B cell (primary cell): ENCODE measurements at regions of chr15 and their contacts with region 1.

Region 1: DNA sequence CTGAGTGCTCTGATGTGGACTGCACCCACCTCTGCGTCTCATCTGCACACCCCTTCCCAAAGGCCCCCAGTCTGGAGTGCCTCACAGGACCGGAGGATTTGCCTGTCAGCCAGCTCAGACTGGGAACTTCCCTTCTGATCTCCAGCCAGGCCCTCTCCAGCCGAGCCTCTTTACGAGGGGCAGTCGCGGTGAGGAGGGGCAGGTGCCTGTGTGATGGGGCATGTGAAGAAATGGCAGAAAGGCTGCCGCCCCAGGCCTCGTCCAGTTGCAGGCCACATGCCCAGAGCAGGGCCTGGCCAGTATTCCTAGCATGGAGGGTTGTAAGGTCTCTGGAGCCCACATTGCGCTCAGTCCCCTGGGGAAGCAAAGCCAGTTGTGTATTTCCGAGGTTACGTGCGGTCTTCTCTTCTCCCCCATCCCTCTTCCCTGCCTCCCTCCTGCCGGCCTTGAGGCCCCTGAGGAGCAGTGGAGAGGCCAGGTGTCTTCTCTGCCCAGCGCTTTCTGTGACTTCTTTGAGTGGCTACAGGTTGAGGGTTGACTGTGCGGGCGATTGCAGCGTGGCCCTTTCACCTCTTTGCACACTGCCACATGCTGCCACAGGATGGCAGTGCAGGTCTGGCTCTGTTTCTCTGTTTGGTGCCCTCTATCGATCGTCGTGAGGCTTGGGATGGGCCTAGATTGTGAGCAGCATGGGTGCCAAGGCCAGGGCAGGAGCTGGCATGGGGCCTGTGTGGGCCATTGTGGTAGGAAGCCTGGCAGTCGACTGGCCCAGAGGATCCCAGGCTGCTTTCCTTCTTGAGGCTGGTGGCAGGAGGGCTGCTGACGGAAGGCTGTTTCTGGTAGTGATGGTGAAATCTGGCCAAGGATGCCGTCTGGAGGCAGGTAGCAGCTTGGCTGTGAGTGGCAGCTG is 5.3 kb downstream of the CLK3 start:
- DNase-seq: peak; percentile 84
- ATAC-seq: peak; percentile 95
- H3K4me3 ChIP-seq: no peak overlapping the region
- H3K4me3 Mint-ChIP-seq: peak overlapping the region; percentile 50
- H3K27ac ChIP-seq: no peak overlapping the region
- H3K27ac Mint-ChIP-seq: peak overlapping the region; percentile 81
- H3K4me1 ChIP-seq: peaks cover 15 to 46% of the 10 kb centered on the region in 2 donors
- H3K4me1 Mint-ChIP-seq: peaks cover 39% of the 10 kb centered on the region
- H3K27me3 ChIP-seq: no peaks in the 10 kb centered on the region
- H3K27me3 Mint-ChIP-seq: no peaks in the 10 kb centered on the region
- CTCF ChIP-seq: peak; percentile 94

Region 2: GRCh38 chr15:74340139-74340538 is 280.8 kb before region 1 on chr15:
- CTCF ChIA-PET with region 1: no interaction called
- POLR2A ChIA-PET with region 1: no interaction called
- intact Hi-C with region 1: no loop called
- DNase-seq: no peak
- ATAC-seq: no peak
- H3K4me3 ChIP-seq: no peak overlapping the region
- H3K4me3 Mint-ChIP-seq: no peak overlapping the region
- H3K27ac ChIP-seq: no peak overlapping the region
- H3K27ac Mint-ChIP-seq: no peak overlapping the region
- H3K4me1 ChIP-seq: no peaks in the 10 kb centered on the region
- H3K4me1 Mint-ChIP-seq: no peaks in the 10 kb centered on the region
- H3K27me3 ChIP-seq: no peaks in the 10 kb centered on the region
- H3K27me3 Mint-ChIP-seq: peaks cover 20% of the 10 kb centered on the region
- CTCF ChIP-seq: no peak

Region 3: GRCh38 chr15:74365611-74366440 is 255.1 kb before region 1 on chr15:
- CTCF ChIA-PET with region 1: no interaction called
- POLR2A ChIA-PET with region 1: no interaction called
- intact Hi-C with region 1: no loop called
- DNase-seq: peak; percentile 51
- ATAC-seq: peak; percentile 49
- H3K4me3 ChIP-seq: peak overlapping the region in 4 of 5 experiments; percentile 10 to 56 (median 48)
- H3K4me3 Mint-ChIP-seq: peak overlapping the region; percentile 76
- H3K27ac ChIP-seq: no peak overlapping the region
- H3K27ac Mint-ChIP-seq: no peak overlapping the region
- H3K4me1 ChIP-seq: peaks cover 13 to 14% of the 10 kb centered on the region in 2 donors
- H3K4me1 Mint-ChIP-seq: peaks cover 3% of the 10 kb centered on the region
- H3K27me3 ChIP-seq: peaks cover 0 to 38% (median 26%) of the 10 kb centered on the region in 4 experiments
- H3K27me3 Mint-ChIP-seq: peaks cover 34% of the 10 kb centered on the region
- CTCF ChIP-seq: no peak

Region 4: DNA sequence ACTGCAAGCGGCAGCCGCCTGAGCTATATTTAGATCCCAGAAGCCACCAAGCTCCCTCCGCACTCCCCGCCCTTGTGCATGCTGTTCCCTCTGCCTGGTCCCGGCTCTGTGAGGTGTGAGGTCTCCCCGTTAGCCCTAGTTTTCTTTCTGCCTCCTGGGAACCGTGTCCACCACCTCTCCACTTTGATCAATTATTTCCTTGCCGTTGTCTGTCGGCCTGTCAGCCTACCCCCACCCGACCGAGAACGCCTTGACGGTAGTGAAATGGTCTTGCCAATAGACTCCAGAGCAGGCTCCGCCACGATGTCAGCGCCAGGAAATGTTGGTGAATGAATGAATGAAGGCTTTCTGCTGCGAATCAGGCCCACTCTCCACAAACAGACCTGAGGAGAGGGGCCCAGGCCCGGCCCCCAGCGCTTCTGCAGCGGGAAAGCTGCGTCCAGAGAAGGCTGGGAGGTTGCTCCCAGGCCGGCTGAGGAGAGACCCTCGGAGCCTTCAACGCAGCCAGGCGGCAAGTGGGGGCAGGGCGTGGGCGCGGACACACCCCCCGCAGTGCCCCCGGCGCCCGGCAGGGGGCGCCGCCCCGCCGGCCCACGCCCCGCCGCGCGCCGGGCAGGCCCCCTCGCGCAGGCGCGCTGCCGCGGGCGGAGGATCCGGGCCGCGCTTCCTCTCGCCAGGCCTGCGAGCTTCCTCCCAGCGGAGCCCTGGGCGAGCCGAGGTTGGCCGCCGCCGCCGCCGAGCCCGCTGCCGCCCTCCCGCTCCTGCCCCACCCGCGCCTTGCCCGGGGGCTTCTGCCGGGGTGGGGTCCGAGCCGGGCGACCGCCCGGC is 160.8 kb after region 1 on chr15 and contains the start of gene CSK:
- CTCF ChIA-PET with region 1: interaction called, 596 read pairs
- POLR2A ChIA-PET with region 1: no interaction called
- intact Hi-C with region 1: no loop called
- DNase-seq: peak; percentile 91
- ATAC-seq: peak; percentile 53
- H3K4me3 ChIP-seq: peak within 1 kb of the TSS; percentile 86 to 99 (median 93)
- H3K4me3 Mint-ChIP-seq: peak within 1 kb of the TSS; percentile 93
- H3K27ac ChIP-seq: peak within 1 kb of the TSS; percentile 91 to 99
- H3K27ac Mint-ChIP-seq: peak within 1 kb of the TSS; percentile 98
- H3K4me1 ChIP-seq: peaks cover 67 to 84% of the 10 kb centered on the region in 2 donors
- H3K4me1 Mint-ChIP-seq: peaks cover 85% of the 10 kb centered on the region
- H3K27me3 ChIP-seq: no peaks in the 10 kb centered on the region
- H3K27me3 Mint-ChIP-seq: no peaks in the 10 kb centered on the region
- CTCF ChIP-seq: peak; percentile 59
- total RNA-seq, gene CSK: 325 and 343 TPM in 2 replicates